Left cardiac atrium (tissue), 4 donors: ENCODE measurements at regions of chr1 and their contacts with region 1.

Region 1: GRCh38 chr1:108691942-108692723 is at the start of gene PRPF38B:
- DNase-seq: peak; percentile 96
- ATAC-seq: peak; percentile 99
- total RNA-seq, gene PRPF38B: 18.9 to 22.6 TPM

Region 2: GRCh38 chr1:108746372-108747205 is 54.5 kb after region 1 on chr1 and contains the start of gene STXBP3:
- intact Hi-C with region 1: loop called in 1 of 2 experiments (anchors 5 kb)
- DNase-seq: peak; percentile 99
- ATAC-seq: peak; percentile 97 to 98
- total RNA-seq, gene STXBP3: 27.7 to 30.4 TPM